Mammary epithelial cell (primary cell): ENCODE measurements at regions of chr19 and their contacts with region 1.

Region 1: GRCh38 chr19:3879656-3880055 is 829 bp upstream of the ATCAY start:
- DNase-seq: no peak
- H3K4me3 ChIP-seq: no peak overlapping the region
- H3K27ac ChIP-seq: no peak overlapping the region
- H3K4me1 ChIP-seq: no peaks in the 10 kb centered on the region
- H3K27me3 ChIP-seq: peaks cover 23% of the 10 kb centered on the region
- CTCF ChIP-seq: peak in 1 of 2 donors; percentile 4

Region 2: GRCh38 chr19:3626473-3627350 is 252.9 kb before region 1 on chr19 and contains the start of gene CACTIN:
- CTCF ChIA-PET with region 1: no interaction called
- dilution Hi-C with region 1: no loop called
- in situ Hi-C with region 1: no loop called
- intact Hi-C with region 1: no loop called
- DNase-seq: peak; percentile 96
- H3K4me3 ChIP-seq: peak within 1 kb of the TSS; percentile 69 to 98 (median 91)
- H3K27ac ChIP-seq: peak within 1 kb of the TSS; percentile 75
- H3K4me1 ChIP-seq: peaks cover 13% of the 10 kb centered on the region
- H3K27me3 ChIP-seq: no peaks in the 10 kb centered on the region
- CTCF ChIP-seq: no peak
- total RNA-seq, gene CACTIN: 16.0 to 26.5 TPM

Region 3: GRCh38 chr19:3774621-3775373 is 104.9 kb before region 1 on chr19:
- CTCF ChIA-PET with region 1: no interaction called
- dilution Hi-C with region 1: loop called (anchors 5 kb)
- in situ Hi-C with region 1: no loop called
- intact Hi-C with region 1: no loop called
- DNase-seq: no peak
- H3K4me3 ChIP-seq: no peak overlapping the region
- H3K27ac ChIP-seq: no peak overlapping the region
- H3K4me1 ChIP-seq: no peaks in the 10 kb centered on the region
- H3K27me3 ChIP-seq: no peaks in the 10 kb centered on the region
- CTCF ChIP-seq: no peak

Region 4: GRCh38 chr19:3830621-3831589 is 48.8 kb before region 1 on chr19:
- CTCF ChIA-PET with region 1: no interaction called
- dilution Hi-C with region 1: loop called (anchors 5 kb)
- in situ Hi-C with region 1: no loop called
- intact Hi-C with region 1: no loop called
- DNase-seq: no peak
- H3K4me3 ChIP-seq: no peak overlapping the region
- H3K27ac ChIP-seq: no peak overlapping the region
- H3K4me1 ChIP-seq: peaks cover 3% of the 10 kb centered on the region
- H3K27me3 ChIP-seq: peaks cover under 1% of the 10 kb centered on the region
- CTCF ChIP-seq: no peak

Region 5: DNA sequence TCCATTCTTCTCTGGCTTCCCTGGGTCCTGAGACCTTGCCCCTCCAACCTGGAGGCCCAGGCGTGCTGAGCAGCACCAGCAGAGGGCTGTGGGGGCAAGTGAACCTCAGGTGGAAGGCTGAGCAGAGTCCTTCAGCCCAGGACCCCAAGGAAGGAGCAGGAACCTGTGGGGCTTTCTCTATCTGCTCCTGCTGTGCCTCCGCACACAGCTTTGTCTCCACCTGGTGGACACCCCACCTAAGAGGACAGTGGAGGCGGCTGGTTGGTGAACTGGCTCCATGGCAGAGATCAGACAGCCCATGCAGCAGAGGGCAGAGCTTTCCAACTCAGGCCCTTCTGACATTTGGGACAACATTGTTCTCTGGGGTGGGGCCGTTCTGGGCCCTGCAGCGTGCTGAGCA is 30.6 kb before region 1 on chr19:
- CTCF ChIA-PET with region 1: no interaction called
- dilution Hi-C with region 1: no loop called
- in situ Hi-C with region 1: no loop called
- intact Hi-C with region 1: no loop called
- DNase-seq: peak; percentile 34
- H3K4me3 ChIP-seq: no peak overlapping the region
- H3K27ac ChIP-seq: no peak overlapping the region
- H3K4me1 ChIP-seq: no peaks in the 10 kb centered on the region
- H3K27me3 ChIP-seq: peaks cover 15% of the 10 kb centered on the region
- CTCF ChIP-seq: peak; percentile 14 to 48

Region 6: GRCh38 chr19:3914199-3914598 is 34.5 kb after region 1 on chr19:
- CTCF ChIA-PET with region 1: no interaction called
- dilution Hi-C with region 1: no loop called
- in situ Hi-C with region 1: no loop called
- intact Hi-C with region 1: no loop called
- DNase-seq: no peak
- H3K4me3 ChIP-seq: no peak overlapping the region
- H3K27ac ChIP-seq: no peak overlapping the region
- H3K4me1 ChIP-seq: no peaks in the 10 kb centered on the region
- H3K27me3 ChIP-seq: no peaks in the 10 kb centered on the region
- CTCF ChIP-seq: no peak

Region 7: GRCh38 chr19:3932931-3933810 is 53.5 kb after region 1 on chr19 and contains the start of gene NMRK2:
- CTCF ChIA-PET with region 1: no interaction called
- dilution Hi-C with region 1: loop called (anchors 5 kb)
- in situ Hi-C with region 1: no loop called
- intact Hi-C with region 1: no loop called
- DNase-seq: no peak
- H3K4me3 ChIP-seq: no peak within 1 kb of the TSS
- H3K27ac ChIP-seq: no peak within 1 kb of the TSS
- H3K4me1 ChIP-seq: no peaks in the 10 kb centered on the region
- H3K27me3 ChIP-seq: peaks cover 8% of the 10 kb centered on the region
- CTCF ChIP-seq: no peak
- total RNA-seq, gene NMRK2: not detected